ENCODE measurements at regions of chr4 and their contacts with region 1.

Region 1: GRCh38 chr4:183438458-183439113 is 5.8 kb upstream of the CDKN2AIP start:
- DNase-seq: peak; percentile 54 to 98
- H3K4me3 ChIP-seq: peak overlapping the region; percentile 33; the same call in 1 of the 2 replicates
- H3K27ac ChIP-seq: peak overlapping the region; percentile 95
- H3K4me1 ChIP-seq: peaks cover 19% of the 10 kb centered on the region
- H3K27me3 ChIP-seq: no peaks in the 10 kb centered on the region
- CTCF ChIP-seq: no peak

Region 2: DNA sequence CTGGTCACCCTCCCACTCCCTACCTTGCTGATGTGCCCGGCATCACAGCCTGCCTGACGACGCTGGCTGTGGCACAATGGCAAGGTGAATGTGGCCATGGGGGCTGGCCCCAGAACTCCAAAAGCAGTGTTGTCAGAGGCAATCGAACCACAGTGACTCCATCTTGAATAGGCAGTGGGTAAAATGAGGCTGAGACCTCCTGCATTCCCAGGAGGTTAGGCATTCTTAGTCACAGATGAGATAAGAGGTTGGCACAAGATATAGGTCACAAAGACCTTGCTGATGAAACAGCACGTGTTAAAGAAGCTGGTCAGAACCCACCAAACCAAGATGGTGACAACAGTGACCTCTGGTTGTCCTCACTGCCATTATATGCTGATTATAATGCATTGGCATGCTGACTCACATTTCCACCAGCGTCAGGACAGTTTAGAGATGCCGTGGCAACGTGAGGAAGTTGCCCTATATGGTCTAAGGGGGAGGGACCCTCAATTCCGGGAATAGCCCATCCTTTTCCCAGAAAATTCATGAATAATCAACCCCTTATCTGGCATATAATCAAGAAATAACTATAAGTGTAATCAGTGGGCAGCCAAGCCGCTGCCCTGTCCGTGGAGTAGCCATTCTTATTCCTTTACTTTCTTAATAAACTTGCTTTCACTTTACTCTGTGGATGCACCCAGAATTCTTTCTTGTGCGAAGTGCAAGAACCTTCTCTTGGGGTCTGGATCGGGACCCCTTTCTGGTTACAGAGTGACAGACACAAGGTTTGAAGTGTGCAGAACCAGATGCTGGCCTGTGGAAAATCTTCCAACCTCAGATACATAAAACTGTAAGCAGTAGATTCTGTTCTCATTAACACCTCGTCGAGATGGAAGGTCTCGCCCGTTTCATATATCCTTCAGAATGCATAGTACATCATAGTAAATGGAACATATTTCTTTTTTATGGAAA is 89.6 kb before region 1 on chr4:
- CTCF ChIA-PET with region 1: no interaction called
- POLR2A ChIA-PET with region 1: interaction called, 16 read pairs
- intact Hi-C with region 1: no loop called
- DNase-seq: peak in 1 of 2 experiments; percentile 40
- H3K4me3 ChIP-seq: no peak overlapping the region
- H3K27ac ChIP-seq: no peak overlapping the region
- H3K4me1 ChIP-seq: no peaks in the 10 kb centered on the region
- H3K27me3 ChIP-seq: no peaks in the 10 kb centered on the region
- CTCF ChIP-seq: no peak

Region 3: DNA sequence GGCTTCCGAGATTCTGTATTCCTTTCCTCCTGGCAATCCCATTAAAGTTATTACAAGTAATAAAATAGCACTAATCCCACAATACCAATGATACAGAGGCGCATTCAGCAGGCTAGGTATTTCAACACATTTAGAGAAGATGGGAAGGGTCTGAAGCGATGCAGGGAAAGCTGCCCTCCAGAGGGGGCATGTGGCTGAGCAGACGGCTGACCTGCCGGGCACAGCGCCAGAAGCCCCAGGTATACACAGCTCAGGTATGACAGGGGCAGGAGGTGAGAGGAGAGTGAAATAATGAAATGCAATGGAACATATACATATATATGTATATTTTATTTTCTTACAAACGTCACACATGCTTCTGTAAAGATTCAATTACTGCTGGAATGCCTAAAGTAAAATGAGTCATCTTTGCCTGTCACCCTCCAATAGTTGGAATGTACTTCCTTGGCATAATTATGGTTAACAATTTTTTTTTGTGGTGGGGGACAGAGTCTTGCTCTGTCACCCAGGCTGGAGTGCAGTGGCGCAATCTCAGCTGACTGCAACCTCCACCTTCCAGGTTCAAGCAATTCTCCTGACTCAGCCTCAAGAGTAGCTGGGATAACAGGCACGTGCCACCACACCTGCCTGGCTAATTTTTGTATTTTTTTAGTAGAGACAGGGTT is 15.5 kb before region 1 on chr4:
- CTCF ChIA-PET with region 1: interaction called, 3 read pairs
- POLR2A ChIA-PET with region 1: no interaction called
- intact Hi-C with region 1: loop called (anchors 1 kb)
- DNase-seq: peak; percentile 65 to 90
- H3K4me3 ChIP-seq: no peak overlapping the region
- H3K27ac ChIP-seq: peak overlapping the region; percentile 55
- H3K4me1 ChIP-seq: peaks cover 30% of the 10 kb centered on the region
- H3K27me3 ChIP-seq: no peaks in the 10 kb centered on the region
- CTCF ChIP-seq: no peak

Region 4: DNA sequence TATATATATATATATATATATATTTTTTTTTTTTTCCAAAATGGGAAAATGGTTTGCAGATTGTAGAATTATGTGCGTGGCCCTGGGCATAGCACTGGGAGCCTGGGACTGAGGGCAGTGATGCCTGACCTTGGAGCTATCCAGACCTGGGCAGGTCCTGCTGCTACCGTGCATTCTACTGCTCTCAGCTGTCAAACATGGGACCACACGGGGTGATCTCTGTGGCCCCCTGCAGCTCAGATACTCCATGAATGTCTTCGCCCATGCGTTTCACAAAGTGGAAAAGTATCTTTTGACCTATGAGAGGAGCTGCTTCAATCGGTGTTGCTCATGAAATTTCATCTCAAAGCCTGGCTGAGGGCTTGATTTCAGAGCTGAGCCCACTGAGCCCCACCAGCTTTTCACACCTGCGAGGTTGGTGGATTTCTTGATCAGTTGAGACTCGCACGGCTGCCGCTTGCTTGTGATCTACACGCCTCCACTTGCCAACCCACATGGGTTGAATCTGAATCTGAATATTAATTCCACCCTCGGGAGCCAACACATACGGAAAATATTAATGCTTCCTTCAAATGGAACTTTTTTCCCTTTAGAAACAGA is 101.9 kb after region 1 on chr4:
- CTCF ChIA-PET with region 1: no interaction called
- POLR2A ChIA-PET with region 1: interaction called, 16 read pairs
- intact Hi-C with region 1: no loop called
- DNase-seq: no peak
- H3K4me3 ChIP-seq: no peak overlapping the region
- H3K27ac ChIP-seq: no peak overlapping the region
- H3K4me1 ChIP-seq: no peaks in the 10 kb centered on the region
- H3K27me3 ChIP-seq: no peaks in the 10 kb centered on the region; the same call in 1 of the 2 replicates
- CTCF ChIP-seq: no peak

Region 5: GRCh38 chr4:183636923-183637322 is 198.3 kb after region 1 on chr4:
- CTCF ChIA-PET with region 1: no interaction called
- POLR2A ChIA-PET with region 1: interaction called, 14 read pairs
- intact Hi-C with region 1: no loop called
- DNase-seq: peak; percentile 29 to 43
- H3K4me3 ChIP-seq: no peak overlapping the region
- H3K27ac ChIP-seq: peak overlapping the region; percentile 46
- H3K4me1 ChIP-seq: peaks cover 16% of the 10 kb centered on the region
- H3K27me3 ChIP-seq: no peaks in the 10 kb centered on the region
- CTCF ChIP-seq: no peak

Region 6: DNA sequence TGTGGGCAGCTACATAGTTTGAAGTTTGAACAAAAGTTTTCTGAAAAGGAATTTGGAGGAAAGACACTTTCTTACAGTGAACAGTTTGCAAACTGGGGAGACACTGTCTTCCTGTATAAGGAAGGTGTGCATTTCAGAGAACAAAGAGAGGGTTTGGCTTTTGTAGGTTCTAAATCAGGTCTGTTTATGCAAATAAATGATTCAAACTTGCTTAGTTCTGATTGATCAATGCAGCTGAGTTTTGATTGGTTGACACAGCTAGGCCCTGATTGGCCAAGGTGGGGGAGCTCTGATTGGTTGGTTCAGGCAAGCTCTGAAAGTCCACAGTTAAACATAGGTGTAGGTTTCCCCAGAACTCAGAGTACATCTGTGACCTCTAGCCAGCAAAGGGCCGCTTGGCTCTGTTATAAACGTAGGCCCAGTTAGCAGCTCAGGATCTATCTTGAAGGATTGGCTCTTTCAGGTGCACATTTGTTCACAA is 842.0 kb after region 1 on chr4:
- CTCF ChIA-PET with region 1: no interaction called
- POLR2A ChIA-PET with region 1: no interaction called
- intact Hi-C with region 1: no loop called
- DNase-seq: no peak
- H3K4me3 ChIP-seq: no peak overlapping the region
- H3K27ac ChIP-seq: no peak overlapping the region
- H3K4me1 ChIP-seq: no peaks in the 10 kb centered on the region
- H3K27me3 ChIP-seq: no peaks in the 10 kb centered on the region
- CTCF ChIP-seq: no peak